ENCODE measurements at regions of chr17 and their contacts with region 1.

Region 1: GRCh38 chr17:37818689-37819088 is 73.8 kb upstream of the HNF1B start:
- DNase-seq: peak; percentile 93
- H3K4me3 ChIP-seq: no peak overlapping the region
- H3K27ac ChIP-seq: no peak overlapping the region
- H3K4me1 ChIP-seq: peaks cover 21% of the 10 kb centered on the region
- H3K27me3 ChIP-seq: no peaks in the 10 kb centered on the region
- CTCF ChIP-seq: no peak

Region 2: DNA sequence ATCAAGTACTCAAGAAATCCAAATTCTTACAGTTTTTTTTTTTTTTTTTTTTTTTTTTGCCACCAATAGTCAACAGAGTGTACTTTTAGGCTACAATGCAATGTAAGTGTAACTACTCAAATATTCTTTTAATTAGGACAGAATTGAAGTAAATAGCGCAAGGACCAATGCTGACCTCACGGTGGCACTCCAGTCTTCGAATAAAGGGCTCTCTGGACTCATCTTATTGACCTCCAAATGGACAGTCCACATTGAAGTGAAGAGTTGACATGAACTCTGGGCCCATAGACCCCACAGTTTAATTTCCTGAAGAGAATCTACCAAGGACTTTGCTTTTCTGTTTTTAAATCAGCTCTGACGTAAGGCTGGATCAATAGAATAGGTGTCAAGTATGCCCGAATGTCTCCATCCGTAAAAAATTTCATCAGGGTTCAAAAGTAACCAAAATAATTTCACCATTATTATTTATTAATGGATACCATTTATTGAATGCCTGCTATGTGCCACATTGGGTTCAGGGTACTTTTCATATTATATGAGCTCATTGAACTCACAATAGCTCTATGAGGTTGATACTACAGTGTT is 168.2 kb before region 1 on chr17:
- CTCF ChIA-PET with region 1: interaction called, 3 read pairs
- dilution Hi-C with region 1: no loop called
- in situ Hi-C with region 1: no loop called
- intact Hi-C with region 1: loop called (anchors 1 kb)
- DNase-seq: peak; percentile 30
- H3K4me3 ChIP-seq: no peak overlapping the region
- H3K27ac ChIP-seq: no peak overlapping the region
- H3K4me1 ChIP-seq: peaks cover 3% of the 10 kb centered on the region
- H3K27me3 ChIP-seq: no peaks in the 10 kb centered on the region
- CTCF ChIP-seq: peak; percentile 55 to 67

Region 3: DNA sequence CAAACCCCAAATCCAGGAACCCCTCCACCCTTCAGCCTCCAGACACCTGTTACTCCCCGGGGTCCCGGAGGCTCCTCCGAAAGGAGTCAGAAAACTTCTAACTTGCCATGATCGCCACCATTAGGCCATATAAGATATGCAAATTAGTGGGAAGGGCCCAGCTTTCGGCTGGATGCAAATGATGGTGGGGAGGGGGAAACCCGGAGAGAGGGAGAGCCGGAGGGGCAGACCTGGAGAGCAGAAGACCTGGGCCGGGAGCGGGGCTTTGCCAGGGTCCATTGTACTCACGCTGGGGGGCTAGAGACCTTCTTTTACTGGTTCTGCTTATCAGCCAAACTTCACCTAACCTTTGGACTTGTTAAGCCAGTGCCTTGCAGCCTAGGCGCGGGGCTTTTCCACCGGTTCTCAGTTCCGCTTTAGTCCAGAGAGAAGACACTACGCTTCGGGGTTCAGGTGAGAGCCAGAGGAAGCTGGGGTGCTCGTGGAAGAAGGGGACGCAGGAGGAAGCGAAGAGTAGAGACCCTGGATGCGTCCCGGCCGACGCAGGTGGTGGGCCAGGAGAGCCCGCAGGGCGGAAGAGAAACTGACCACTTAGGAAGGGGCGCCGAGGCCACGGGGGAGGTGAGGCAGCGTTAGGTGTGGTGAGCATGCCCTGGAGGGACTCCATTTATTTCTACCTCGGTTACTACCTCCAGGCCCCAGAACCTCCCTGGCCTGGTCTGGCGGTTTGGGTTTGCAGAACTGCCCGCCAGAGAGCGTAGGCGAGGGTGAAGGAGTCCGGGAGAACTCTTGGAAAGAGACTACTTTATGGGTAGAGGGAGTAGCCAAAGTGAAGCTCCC is 73.5 kb before region 1 on chr17 and contains the start of gene HNF1B:
- CTCF ChIA-PET with region 1: no interaction called
- dilution Hi-C with region 1: no loop called
- in situ Hi-C with region 1: no loop called
- intact Hi-C with region 1: no loop called
- DNase-seq: no peak
- H3K4me3 ChIP-seq: no peak within 1 kb of the TSS
- H3K27ac ChIP-seq: no peak within 1 kb of the TSS
- H3K4me1 ChIP-seq: no peaks in the 10 kb centered on the region
- H3K27me3 ChIP-seq: peaks cover 56% of the 10 kb centered on the region
- CTCF ChIP-seq: no peak
- total RNA-seq, gene HNF1B: not detected